ENCODE measurements at regions of chr12 and their contacts with region 1.

Region 1: DNA sequence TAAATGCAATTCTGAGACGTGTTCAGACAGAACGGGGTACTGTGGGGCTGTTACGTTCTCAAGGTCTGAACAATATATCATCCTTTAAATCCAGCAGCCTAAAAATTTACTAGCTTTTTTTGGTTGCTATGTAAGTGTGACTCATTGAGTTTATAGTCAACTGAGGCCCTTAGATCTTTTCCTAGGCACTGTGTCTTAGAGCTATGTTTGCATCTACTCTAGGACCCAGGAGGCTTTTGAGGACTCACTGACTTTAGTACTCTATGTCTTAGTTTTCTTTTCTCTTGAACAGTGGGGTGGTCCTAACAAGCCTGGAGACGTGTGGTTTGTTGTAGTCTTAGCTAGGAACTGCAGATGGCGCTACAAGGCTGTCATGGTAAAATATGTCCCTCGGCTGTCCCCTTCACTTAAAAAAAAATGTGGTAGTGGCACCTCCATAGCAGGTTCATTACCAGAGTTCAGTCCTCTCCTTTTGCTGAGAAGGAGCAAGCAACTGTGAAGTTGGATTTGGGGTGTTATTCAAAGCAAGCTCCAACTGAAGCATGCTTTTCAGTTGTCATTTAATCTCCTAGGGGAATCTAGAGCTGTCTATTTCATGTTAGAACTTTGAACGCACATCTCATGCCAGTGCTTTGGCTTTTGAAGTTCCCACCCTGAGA is 8.7 kb upstream of the SPATS2 start:
- DNase-seq: peak; percentile 60
- H3K4me3 Mint-ChIP-seq: no peak overlapping the region
- H3K27ac Mint-ChIP-seq: no peak overlapping the region
- H3K4me1 Mint-ChIP-seq: peaks cover 3% of the 10 kb centered on the region
- H3K27me3 Mint-ChIP-seq: peaks cover 35% of the 10 kb centered on the region

Region 2: DNA sequence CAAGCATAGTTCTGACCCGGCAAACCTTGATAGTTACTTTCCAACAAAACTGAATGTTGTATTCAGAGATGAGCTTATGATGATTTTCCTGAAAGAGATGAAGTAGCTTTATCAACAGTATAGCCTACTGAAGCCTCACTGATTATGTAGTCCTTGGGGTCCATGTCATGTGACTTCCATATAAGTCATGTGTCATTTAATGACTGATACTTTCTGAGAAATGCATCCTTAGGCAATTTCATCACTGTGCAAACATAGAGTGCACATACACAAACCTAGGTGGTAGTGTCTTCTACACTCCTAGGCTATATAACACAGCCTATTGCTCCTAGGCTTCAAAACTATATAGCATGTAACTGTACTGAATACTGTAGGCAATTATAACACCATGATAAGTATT is 122.2 kb before region 1 on chr12:
- CTCF ChIA-PET with region 1: no interaction called
- POLR2A ChIA-PET with region 1: no interaction called
- DNase-seq: no peak
- H3K4me3 Mint-ChIP-seq: peak overlapping the region; percentile 12
- H3K27ac Mint-ChIP-seq: no peak overlapping the region
- H3K4me1 Mint-ChIP-seq: peaks cover 24% of the 10 kb centered on the region
- H3K27me3 Mint-ChIP-seq: peaks cover 3% of the 10 kb centered on the region

Region 3: GRCh38 chr12:49296034-49296835 is 62.4 kb before region 1 on chr12:
- CTCF ChIA-PET with region 1: interaction called, 161 read pairs
- POLR2A ChIA-PET with region 1: no interaction called
- DNase-seq: peak; percentile 68
- H3K4me3 Mint-ChIP-seq: peak overlapping the region; percentile 62
- H3K27ac Mint-ChIP-seq: no peak overlapping the region
- H3K4me1 Mint-ChIP-seq: peaks cover 34% of the 10 kb centered on the region
- H3K27me3 Mint-ChIP-seq: peaks cover 53% of the 10 kb centered on the region

Region 4: DNA sequence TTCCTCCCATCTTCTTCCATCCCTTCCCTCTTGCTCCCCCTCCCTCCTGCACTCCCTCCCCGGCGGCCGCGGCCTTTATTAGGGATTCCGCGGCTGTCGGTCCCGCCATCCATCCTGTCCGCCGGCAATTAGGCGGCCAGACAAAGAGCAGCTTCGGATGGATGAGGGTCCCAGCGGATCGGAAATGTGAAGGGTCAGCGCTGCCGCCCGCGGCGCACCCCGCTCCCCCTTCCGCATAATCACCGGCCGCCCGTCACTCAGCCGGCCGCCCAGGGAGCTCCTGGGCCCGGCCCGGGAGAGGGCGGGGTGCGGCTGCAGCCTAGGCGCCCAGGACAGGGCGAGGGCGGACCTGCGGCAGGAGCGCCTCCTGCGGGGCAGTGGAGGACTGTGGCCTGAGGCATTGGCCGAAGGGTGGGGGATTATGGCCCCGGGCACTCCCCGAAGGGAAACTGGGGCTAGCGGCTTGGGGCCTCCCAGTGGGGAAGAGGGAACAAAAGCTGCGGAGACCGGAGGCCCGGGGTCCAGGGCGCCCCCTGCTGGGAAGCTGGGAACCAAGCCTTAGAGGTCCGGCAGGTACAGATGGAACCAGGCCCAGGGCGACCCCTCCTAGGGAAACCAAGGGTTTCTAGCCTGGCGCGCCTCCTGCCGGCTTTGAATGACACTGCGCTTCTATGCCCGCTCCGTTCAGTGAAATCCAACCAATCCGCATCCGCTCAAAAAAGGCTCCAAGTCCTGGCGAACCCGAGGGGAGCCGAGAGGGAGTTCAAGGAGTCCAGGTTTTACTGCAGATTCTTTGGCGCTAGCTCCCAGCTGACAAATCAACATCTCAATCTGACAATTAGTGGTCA is 16.3 kb before region 1 on chr12:
- CTCF ChIA-PET with region 1: interaction called, 65 read pairs
- POLR2A ChIA-PET with region 1: interaction called, 4 read pairs
- DNase-seq: peak; percentile 80
- H3K4me3 Mint-ChIP-seq: peak overlapping the region; percentile 35
- H3K27ac Mint-ChIP-seq: no peak overlapping the region
- H3K4me1 Mint-ChIP-seq: peaks cover 40% of the 10 kb centered on the region
- H3K27me3 Mint-ChIP-seq: peaks cover 90% of the 10 kb centered on the region

Region 5: DNA sequence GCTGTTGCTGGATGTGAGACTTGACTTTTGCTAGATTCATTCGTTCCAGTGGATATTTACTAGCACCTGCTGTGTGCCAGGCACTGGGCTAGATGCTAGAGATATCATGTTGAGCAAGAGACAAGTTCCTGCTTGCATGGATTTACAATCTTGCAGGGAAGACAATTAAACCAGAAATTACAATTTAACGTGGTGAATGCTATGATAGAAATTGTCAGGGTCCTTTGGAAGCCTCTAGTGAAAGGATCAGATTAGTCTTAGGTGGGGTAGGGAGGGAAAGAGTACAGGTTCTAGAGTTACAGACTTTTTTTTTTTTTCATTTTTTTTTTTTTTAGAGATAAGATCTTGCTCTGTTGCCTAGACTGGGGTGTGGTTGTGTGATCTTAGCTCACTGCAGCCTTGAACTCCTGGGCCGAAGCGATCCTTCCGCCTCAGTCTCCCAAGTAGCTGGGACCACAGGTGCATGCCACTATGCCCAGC is 45.4 kb after region 1 on chr12:
- CTCF ChIA-PET with region 1: interaction called, 16 read pairs
- POLR2A ChIA-PET with region 1: no interaction called
- DNase-seq: no peak
- H3K4me3 Mint-ChIP-seq: no peak overlapping the region
- H3K27ac Mint-ChIP-seq: no peak overlapping the region
- H3K4me1 Mint-ChIP-seq: peaks cover 17% of the 10 kb centered on the region
- H3K27me3 Mint-ChIP-seq: no peaks in the 10 kb centered on the region

Region 6: DNA sequence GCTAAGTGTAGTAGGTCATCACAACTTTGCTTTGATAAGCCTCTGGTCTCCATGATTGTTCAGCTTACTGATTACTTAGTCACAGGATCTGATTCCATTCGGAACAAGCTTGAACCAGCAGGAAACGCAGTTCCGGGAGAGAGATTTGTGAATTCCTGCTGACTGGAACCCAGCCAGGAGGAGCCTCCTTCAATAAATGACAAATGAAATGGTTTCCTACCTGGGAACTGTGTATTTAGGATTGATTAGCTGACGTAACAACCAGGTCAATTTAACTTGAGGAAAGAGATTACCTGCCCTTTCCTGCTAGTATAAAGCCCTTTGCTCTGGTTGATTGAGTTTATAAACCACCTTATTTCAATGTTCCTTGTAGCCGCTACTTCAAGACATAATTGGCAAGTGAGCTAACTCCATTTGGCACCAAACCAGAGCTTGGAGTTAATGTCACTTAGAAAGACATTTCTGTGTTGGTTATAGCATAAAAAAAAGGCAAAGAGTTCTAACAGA is 145.1 kb after region 1 on chr12:
- CTCF ChIA-PET with region 1: interaction called, 237 read pairs
- POLR2A ChIA-PET with region 1: no interaction called
- DNase-seq: no peak
- H3K4me3 Mint-ChIP-seq: no peak overlapping the region
- H3K27ac Mint-ChIP-seq: no peak overlapping the region
- H3K4me1 Mint-ChIP-seq: peaks cover 1% of the 10 kb centered on the region
- H3K27me3 Mint-ChIP-seq: no peaks in the 10 kb centered on the region

Region 7: GRCh38 chr12:49553512-49554088 is 195.0 kb after region 1 on chr12:
- CTCF ChIA-PET with region 1: interaction called, 23 read pairs
- POLR2A ChIA-PET with region 1: no interaction called
- DNase-seq: no peak
- H3K4me3 Mint-ChIP-seq: no peak overlapping the region
- H3K27ac Mint-ChIP-seq: no peak overlapping the region
- H3K4me1 Mint-ChIP-seq: peaks cover 8% of the 10 kb centered on the region
- H3K27me3 Mint-ChIP-seq: peaks cover 30% of the 10 kb centered on the region

Region 8: DNA sequence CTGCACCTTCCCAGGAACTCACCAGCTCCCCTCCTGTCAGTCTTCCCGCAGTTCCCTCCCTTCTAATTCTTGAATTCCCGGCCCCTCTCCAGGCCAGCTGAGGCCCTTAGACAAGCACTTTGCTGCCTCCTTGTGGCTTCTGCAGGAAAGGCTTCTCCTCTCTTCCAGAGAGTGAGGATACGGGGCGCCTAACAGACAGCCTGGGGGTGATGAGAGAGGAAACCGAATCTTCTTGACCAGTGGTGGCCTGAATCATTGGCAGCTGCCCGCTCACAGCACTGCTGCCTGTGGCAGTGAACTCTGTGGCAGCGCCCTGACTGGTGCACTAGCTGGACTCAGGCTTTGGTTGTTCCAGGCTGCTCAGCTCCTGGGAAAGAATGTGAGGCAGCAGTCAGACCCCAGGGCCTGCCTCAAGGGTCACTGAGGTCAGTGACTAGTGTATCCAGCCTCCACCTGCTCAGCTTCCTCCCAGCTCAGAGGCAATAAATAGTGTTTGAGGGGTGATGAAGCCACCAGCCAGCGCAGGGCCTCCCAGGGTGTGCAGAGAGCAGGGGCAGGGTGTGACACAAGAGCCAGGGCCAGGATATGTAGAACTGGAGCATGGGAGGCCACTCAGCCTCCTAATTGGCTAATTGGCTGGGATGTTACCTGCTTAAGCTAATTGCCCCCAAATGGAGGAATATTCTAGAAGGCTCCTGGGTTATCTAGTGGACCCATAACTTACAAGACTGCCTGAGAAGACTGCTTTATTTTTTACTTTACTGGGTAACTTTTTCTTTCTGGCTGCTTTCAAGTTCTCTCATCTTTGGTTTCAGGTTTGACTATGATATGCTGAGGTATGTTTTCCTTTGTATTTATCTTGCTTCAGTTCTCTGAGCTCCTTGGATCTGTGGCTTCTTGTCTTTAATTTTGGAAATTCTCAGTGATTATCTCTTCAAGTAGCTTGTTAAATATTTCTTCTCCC is 222.2 kb after region 1 on chr12:
- CTCF ChIA-PET with region 1: interaction called, 33 read pairs
- POLR2A ChIA-PET with region 1: no interaction called
- DNase-seq: peak; percentile 65
- H3K4me3 Mint-ChIP-seq: no peak overlapping the region
- H3K27ac Mint-ChIP-seq: no peak overlapping the region
- H3K4me1 Mint-ChIP-seq: peaks cover 21% of the 10 kb centered on the region
- H3K27me3 Mint-ChIP-seq: no peaks in the 10 kb centered on the region

Measured in activated CD4-positive, alpha-beta memory T cell treated with anti-CD3 and anti-CD28 coated beads, Interleukin-2, amount 10 ng/mL, durations not matched to agents 7 days and 5 days (primary cell).